K562 (cell line): ENCODE measurements at regions of chr7 and their contacts with region 1.

Region 1: GRCh38 chr7:32495298-32496176 is at the start of gene AVL9:
- DNase-seq: peak; percentile 96 to 98 (median 98)
- ATAC-seq: peak; percentile 96
- H3K4me3 ChIP-seq: peak within 1 kb of the TSS; percentile 57
- H3K27ac ChIP-seq: peak within 1 kb of the TSS; percentile 98
- H3K4me1 ChIP-seq: peaks cover 0 to 11% of the 10 kb centered on the region in 2 experiments; a peak in 3 of 5 replicates
- H3K27me3 ChIP-seq: no peaks in the 10 kb centered on the region
- CTCF ChIP-seq: no peak
- EP300 ChIP-seq: no peak
- POLR2A ChIP-seq: peak; percentile 94
- RAD21 ChIP-seq: no peak
- polyA plus RNA-seq, gene AVL9: 6.4 to 8.7 TPM

Region 2: GRCh38 chr7:32506266-32507054 is 10.9 kb after region 1 on chr7:
- CTCF ChIA-PET with region 1: no interaction called
- POLR2A ChIA-PET with region 1: interaction called, 23 read pairs
- in situ Hi-C with region 1: no loop called
- intact Hi-C with region 1: no loop called
- DNase-seq: peak; percentile 69 to 90 (median 75)
- ATAC-seq: peak; percentile 95
- H3K4me3 ChIP-seq: no peak overlapping the region
- H3K27ac ChIP-seq: peak overlapping the region; percentile 95
- H3K4me1 ChIP-seq: peaks cover 7 to 34% of the 10 kb centered on the region in 2 experiments; a peak in 4 of 5 replicates
- H3K27me3 ChIP-seq: no peaks in the 10 kb centered on the region
- CTCF ChIP-seq: no peak
- EP300 ChIP-seq: peak; percentile 95
- POLR2A ChIP-seq: no peak
- RAD21 ChIP-seq: no peak

Region 3: GRCh38 chr7:32539919-32540531 is 44.5 kb after region 1 on chr7:
- CTCF ChIA-PET with region 1: no interaction called
- POLR2A ChIA-PET with region 1: no interaction called
- in situ Hi-C with region 1: no loop called
- intact Hi-C with region 1: loop called (anchors 5 kb)
- DNase-seq: peak in 1 of 4 experiments; percentile 9
- ATAC-seq: peak; percentile 60
- H3K4me3 ChIP-seq: no peak overlapping the region
- H3K27ac ChIP-seq: peak overlapping the region; percentile 14; the same call in 1 of the 3 replicates
- H3K4me1 ChIP-seq: peaks cover 0 to 4% of the 10 kb centered on the region in 2 experiments; a peak in 2 of 5 replicates
- H3K27me3 ChIP-seq: no peaks in the 10 kb centered on the region
- CTCF ChIP-seq: no peak
- EP300 ChIP-seq: peak; percentile 32; the same call in 1 of the 2 replicates
- POLR2A ChIP-seq: no peak
- RAD21 ChIP-seq: no peak

Region 4: GRCh38 chr7:32660936-32661335 is 165.4 kb after region 1 on chr7:
- CTCF ChIA-PET with region 1: no interaction called
- POLR2A ChIA-PET with region 1: no interaction called
- in situ Hi-C with region 1: no loop called
- intact Hi-C with region 1: loop called (anchors 10 kb)
- DNase-seq: no peak
- ATAC-seq: no peak
- H3K4me3 ChIP-seq: no peak overlapping the region
- H3K27ac ChIP-seq: peak overlapping the region; percentile 78; the same call in 1 of the 3 replicates
- H3K4me1 ChIP-seq: peaks cover 4 to 47% of the 10 kb centered on the region in 2 experiments
- H3K27me3 ChIP-seq: no peaks in the 10 kb centered on the region
- CTCF ChIP-seq: no peak
- EP300 ChIP-seq: no peak
- POLR2A ChIP-seq: no peak
- RAD21 ChIP-seq: no peak

Region 5: GRCh38 chr7:32680259-32681173 is 185.0 kb after region 1 on chr7:
- CTCF ChIA-PET with region 1: no interaction called
- POLR2A ChIA-PET with region 1: no interaction called
- in situ Hi-C with region 1: no loop called
- intact Hi-C with region 1: loop called (anchors 5 kb)
- DNase-seq: peak in 2 of 4 experiments; percentile 31 to 92
- ATAC-seq: peak; percentile 96
- H3K4me3 ChIP-seq: no peak overlapping the region
- H3K27ac ChIP-seq: peak overlapping the region; percentile 95
- H3K4me1 ChIP-seq: peaks cover 0 to 22% of the 10 kb centered on the region in 2 experiments; a peak in 4 of 5 replicates
- H3K27me3 ChIP-seq: no peaks in the 10 kb centered on the region
- CTCF ChIP-seq: no peak
- EP300 ChIP-seq: peak; percentile 84
- POLR2A ChIP-seq: no peak
- RAD21 ChIP-seq: no peak

Region 6: DNA sequence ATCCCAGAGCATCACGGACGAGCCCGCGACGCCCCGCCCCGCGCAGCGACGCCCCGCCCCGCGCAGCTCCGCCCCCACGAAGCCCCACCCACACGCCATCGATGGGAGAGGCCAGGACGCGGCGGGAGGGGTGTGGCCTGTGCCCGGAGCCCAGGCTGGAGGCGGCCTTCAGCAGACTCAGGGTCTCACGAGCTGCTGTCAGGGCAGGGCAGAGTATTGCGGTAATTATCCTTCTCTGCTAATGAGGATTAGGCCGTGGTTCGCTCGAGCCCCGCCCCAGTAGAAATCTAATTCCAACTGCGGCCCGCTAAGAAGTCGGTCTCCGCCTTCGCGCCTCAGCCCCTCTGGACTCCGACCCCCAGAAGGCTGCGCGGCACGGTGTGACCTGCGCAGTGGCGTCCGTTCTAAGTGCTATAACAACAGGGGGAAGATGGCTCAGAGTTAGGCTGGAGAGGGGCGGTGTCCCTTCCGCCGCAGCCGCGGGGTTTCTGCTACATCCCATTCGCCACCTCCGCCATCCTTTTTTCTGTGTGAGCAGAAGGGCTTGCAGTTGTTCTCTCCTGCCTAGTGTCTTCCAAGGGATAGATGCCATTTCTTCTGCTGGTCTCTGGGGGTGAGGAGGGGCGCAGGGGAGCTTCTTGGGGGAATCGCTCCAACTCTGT is 567.4 kb after region 1 on chr7:
- CTCF ChIA-PET with region 1: no interaction called
- POLR2A ChIA-PET with region 1: no interaction called
- in situ Hi-C with region 1: no loop called
- intact Hi-C with region 1: loop called (anchors 10 kb)
- DNase-seq: peak; percentile 95 to 97 (median 96)
- ATAC-seq: peak; percentile 96
- H3K4me3 ChIP-seq: peak overlapping the region; percentile 90
- H3K27ac ChIP-seq: peak overlapping the region; percentile 94
- H3K4me1 ChIP-seq: peaks cover 7 to 20% of the 10 kb centered on the region in 2 experiments; a peak in 3 of 5 replicates
- H3K27me3 ChIP-seq: no peaks in the 10 kb centered on the region
- CTCF ChIP-seq: no peak
- EP300 ChIP-seq: no peak
- POLR2A ChIP-seq: peak; percentile 82
- RAD21 ChIP-seq: no peak